ENCODE measurements at regions of chr11 and their contacts with region 1.

Region 1: DNA sequence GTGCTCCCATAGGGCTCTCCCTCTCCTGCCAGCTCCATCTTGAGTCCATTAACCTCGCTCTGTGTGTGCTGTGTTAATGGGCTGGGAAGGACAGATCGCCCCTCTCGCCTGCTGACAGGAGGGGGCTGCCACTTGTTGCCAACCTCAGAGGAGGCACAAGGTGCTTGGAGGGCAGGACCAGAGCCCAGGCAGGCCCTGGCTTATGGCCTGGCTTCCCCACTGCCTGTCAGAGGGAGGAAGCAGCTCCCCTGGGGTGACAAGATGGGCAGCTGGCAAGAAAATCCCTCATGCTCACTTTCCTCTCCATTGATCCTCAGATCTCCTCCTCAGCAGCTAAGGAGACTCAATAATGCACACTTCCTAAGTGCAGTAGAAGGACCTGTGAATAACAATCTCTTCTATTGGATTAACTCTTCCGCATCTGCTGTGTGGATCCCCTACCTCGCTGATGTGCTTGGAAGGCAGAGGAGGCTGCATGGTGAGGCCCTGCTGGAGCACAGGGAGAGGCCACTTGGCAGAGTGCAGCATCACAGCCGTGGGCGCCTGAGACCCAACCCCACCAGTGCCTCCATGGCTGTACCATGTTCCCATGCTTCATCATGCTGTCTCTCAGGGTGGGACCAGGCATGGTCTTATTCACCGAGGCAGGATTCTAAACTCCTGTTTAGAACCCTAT is 70.3 kb downstream of the TRIM29 start:
- DNase-seq: no peak
- ATAC-seq: no peak
- H3K4me3 ChIP-seq: no peak overlapping the region
- H3K27ac ChIP-seq: no peak overlapping the region
- H3K4me1 ChIP-seq: no peaks in the 10 kb centered on the region
- H3K27me3 ChIP-seq: peaks cover 0 to 20% (median 0%) of the 10 kb centered on the region in 3 donors
- CTCF ChIP-seq: no peak

Region 2: GRCh38 chr11:119952441-119952840 is 115.1 kb before region 1 on chr11:
- intact Hi-C with region 1: no loop called
- DNase-seq: no peak
- ATAC-seq: no peak
- H3K4me3 ChIP-seq: no peak overlapping the region
- H3K27ac ChIP-seq: no peak overlapping the region
- H3K4me1 ChIP-seq: no peaks in the 10 kb centered on the region
- H3K27me3 ChIP-seq: peaks cover 0 to 5% (median 2%) of the 10 kb centered on the region in 3 donors
- CTCF ChIP-seq: no peak

Region 3: DNA sequence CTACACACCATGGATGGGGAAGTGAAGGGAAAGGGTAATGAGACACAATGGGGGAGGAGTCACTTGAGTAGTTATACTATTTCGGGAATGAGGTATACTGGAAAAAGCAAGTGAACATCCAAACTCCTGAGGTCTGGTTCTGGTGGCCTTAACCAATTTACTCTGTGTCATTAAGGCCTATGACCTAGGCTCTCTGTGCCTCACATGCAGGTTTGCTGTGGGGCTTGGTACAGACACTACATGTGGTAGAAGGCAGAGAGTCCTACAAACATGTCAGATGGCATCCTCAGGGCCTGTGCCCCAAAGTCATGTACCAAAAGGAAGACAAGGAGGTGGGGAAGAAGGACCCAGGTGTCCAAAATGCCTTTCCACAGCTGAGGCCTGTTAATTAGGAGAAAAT is 28.5 kb before region 1 on chr11:
- intact Hi-C with region 1: loop called in 1 of 2 experiments (anchors 1 kb)
- DNase-seq: no peak
- ATAC-seq: no peak
- H3K4me3 ChIP-seq: no peak overlapping the region
- H3K27ac ChIP-seq: no peak overlapping the region
- H3K4me1 ChIP-seq: no peaks in the 10 kb centered on the region
- H3K27me3 ChIP-seq: no peaks in the 10 kb centered on the region
- CTCF ChIP-seq: no peak

Region 4: DNA sequence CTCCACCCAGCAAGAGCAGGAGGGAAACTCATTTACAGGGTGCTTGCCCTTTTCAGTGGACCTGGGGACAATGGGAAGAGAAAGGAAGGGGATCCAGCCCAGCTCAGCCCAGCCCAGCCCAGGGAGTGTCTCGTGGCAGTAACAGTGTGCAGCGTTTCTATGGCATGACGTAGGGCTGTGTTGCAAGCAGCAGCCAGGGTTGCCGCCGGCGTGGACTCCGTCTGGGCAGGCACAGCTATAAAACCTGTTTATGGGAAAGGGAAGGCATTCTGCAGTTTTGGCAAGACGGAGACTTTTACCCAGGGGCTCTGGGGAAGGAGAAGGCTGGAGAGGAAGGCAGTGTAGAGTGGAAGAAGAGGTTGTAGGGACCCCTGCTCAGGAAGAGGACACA is 61.2 kb after region 1 on chr11:
- intact Hi-C with region 1: no loop called
- DNase-seq: peak; percentile 21 to 49
- ATAC-seq: peak in 2 of 4 donors; percentile 67 to 72
- H3K4me3 ChIP-seq: no peak overlapping the region
- H3K27ac ChIP-seq: no peak overlapping the region
- H3K4me1 ChIP-seq: no peaks in the 10 kb centered on the region
- H3K27me3 ChIP-seq: peaks cover 0 to 13% (median 0%) of the 10 kb centered on the region in 3 donors
- CTCF ChIP-seq: no peak

Region 5: GRCh38 chr11:120248551-120249278 is 181.1 kb after region 1 on chr11:
- intact Hi-C with region 1: no loop called
- DNase-seq: no peak
- ATAC-seq: no peak
- H3K4me3 ChIP-seq: no peak overlapping the region
- H3K27ac ChIP-seq: no peak overlapping the region
- H3K4me1 ChIP-seq: no peaks in the 10 kb centered on the region
- H3K27me3 ChIP-seq: peaks cover 0 to 57% (median 4%) of the 10 kb centered on the region in 3 donors
- CTCF ChIP-seq: no peak